OCI-LY7 (cell line): ENCODE measurements at regions of chr14 and their contacts with region 1.

Region 1: GRCh38 chr14:60926002-60926401 is 54.9 kb downstream of the TRMT5 start:
- DNase-seq: no peak
- H3K4me3 ChIP-seq: no peak overlapping the region
- H3K27ac ChIP-seq: no peak overlapping the region
- H3K4me1 ChIP-seq: peaks cover 1% of the 10 kb centered on the region
- CTCF ChIP-seq: no peak

Region 2: GRCh38 chr14:60945984-60946383 is 20.0 kb after region 1 on chr14:
- CTCF ChIA-PET with region 1: no interaction called
- POLR2A ChIA-PET with region 1: interaction called, 10 read pairs
- intact Hi-C with region 1: no loop called
- DNase-seq: no peak
- H3K4me3 ChIP-seq: no peak overlapping the region
- H3K27ac ChIP-seq: no peak overlapping the region
- H3K4me1 ChIP-seq: no peaks in the 10 kb centered on the region
- CTCF ChIP-seq: no peak